H1 (cell line): ENCODE measurements at regions of chr16 and their contacts with region 1.

Region 1: GRCh38 chr16:12794486-12795387 is 8.9 kb downstream of the CPPED1 start:
- DNase-seq: no peak
- H3K4me3 ChIP-seq: no peak overlapping the region
- H3K27ac ChIP-seq: no peak overlapping the region
- H3K4me1 ChIP-seq: peaks cover 0 to 3% (median 1%) of the 10 kb centered on the region in 4 experiments; a peak in 1 of 7 replicates
- H3K27me3 ChIP-seq: no peaks in the 10 kb centered on the region
- CTCF ChIP-seq: no peak
- EP300 ChIP-seq: no peak
- POLR2A ChIP-seq: no peak
- RAD21 ChIP-seq: no peak

Region 2: GRCh38 chr16:12771341-12771798 is 23.4 kb before region 1 on chr16:
- CTCF ChIA-PET with region 1: no interaction called
- POLR2A ChIA-PET with region 1: no interaction called
- DNase-seq: no peak
- H3K4me3 ChIP-seq: no peak overlapping the region
- H3K27ac ChIP-seq: no peak overlapping the region
- H3K4me1 ChIP-seq: no peaks in the 10 kb centered on the region
- H3K27me3 ChIP-seq: no peaks in the 10 kb centered on the region
- CTCF ChIP-seq: no peak
- EP300 ChIP-seq: no peak
- POLR2A ChIP-seq: no peak
- RAD21 ChIP-seq: no peak

Region 3: GRCh38 chr16:12781777-12782176 is 13.0 kb before region 1 on chr16:
- CTCF ChIA-PET with region 1: interaction called, 26 read pairs
- POLR2A ChIA-PET with region 1: interaction called, 4 read pairs
- DNase-seq: no peak
- H3K4me3 ChIP-seq: no peak overlapping the region
- H3K27ac ChIP-seq: no peak overlapping the region
- H3K4me1 ChIP-seq: no peaks in the 10 kb centered on the region
- H3K27me3 ChIP-seq: no peaks in the 10 kb centered on the region
- CTCF ChIP-seq: no peak
- EP300 ChIP-seq: no peak
- POLR2A ChIP-seq: no peak
- RAD21 ChIP-seq: no peak

Region 4: GRCh38 chr16:12829096-12829888 is 34.6 kb after region 1 on chr16:
- CTCF ChIA-PET with region 1: no interaction called
- POLR2A ChIA-PET with region 1: no interaction called
- DNase-seq: no peak
- H3K4me3 ChIP-seq: no peak overlapping the region
- H3K27ac ChIP-seq: no peak overlapping the region
- H3K4me1 ChIP-seq: peaks cover 0 to 4% (median 0%) of the 10 kb centered on the region in 4 experiments; a peak in 1 of 7 replicates
- H3K27me3 ChIP-seq: no peaks in the 10 kb centered on the region
- CTCF ChIP-seq: no peak
- EP300 ChIP-seq: no peak
- POLR2A ChIP-seq: no peak
- RAD21 ChIP-seq: no peak

Region 5: GRCh38 chr16:12846592-12846991 is 51.9 kb after region 1 on chr16:
- CTCF ChIA-PET with region 1: no interaction called
- POLR2A ChIA-PET with region 1: no interaction called
- DNase-seq: no peak
- H3K4me3 ChIP-seq: no peak overlapping the region
- H3K27ac ChIP-seq: no peak overlapping the region
- H3K4me1 ChIP-seq: no peaks in the 10 kb centered on the region
- H3K27me3 ChIP-seq: no peaks in the 10 kb centered on the region
- CTCF ChIP-seq: no peak
- EP300 ChIP-seq: no peak
- POLR2A ChIP-seq: no peak
- RAD21 ChIP-seq: no peak